GM12878 (cell line): ENCODE measurements at regions of chr17 and their contacts with region 1.

Region 1: GRCh38 chr17:43024407-43025289 is at the start of gene RND2:
- DNase-seq: peak; percentile 40
- ATAC-seq: peak; percentile 77
- H3K4me3 ChIP-seq: peak within 1 kb of the TSS; percentile 81; the same call in 1 of the 2 replicates
- H3K27ac ChIP-seq: no peak within 1 kb of the TSS
- H3K4me1 ChIP-seq: peaks cover 7% of the 10 kb centered on the region; the same call in 1 of the 2 replicates
- H3K27me3 ChIP-seq: no peaks in the 10 kb centered on the region
- CTCF ChIP-seq: peak; percentile 70 to 82 (median 71)
- EP300 ChIP-seq: no peak
- POLR2A ChIP-seq: no peak
- RAD21 ChIP-seq: peak; percentile 74
- polyA plus RNA-seq, gene RND2: not detected

Region 2: GRCh38 chr17:43006639-43007551 is 17.8 kb before region 1 on chr17 and contains the start of gene IFI35:
- CTCF ChIA-PET with region 1: interaction called, 14 read pairs
- POLR2A ChIA-PET with region 1: interaction called, 7 read pairs
- RAD21 ChIA-PET with region 1: interaction called, 4 read pairs
- SMC1A ChIA-PET with region 1: interaction called, 4 read pairs
- in situ Hi-C with region 1: no loop called
- intact Hi-C with region 1: no loop called
- DNase-seq: peak; percentile 69
- ATAC-seq: peak; percentile 97
- H3K4me3 ChIP-seq: peak within 1 kb of the TSS; percentile 97
- H3K27ac ChIP-seq: peak within 1 kb of the TSS; percentile 97
- H3K4me1 ChIP-seq: peaks cover 6% of the 10 kb centered on the region
- H3K27me3 ChIP-seq: no peaks in the 10 kb centered on the region
- CTCF ChIP-seq: peak; percentile 23 to 79 (median 41); a peak in 5 of 6 replicates
- EP300 ChIP-seq: peak in 1 of 2 experiments; percentile 30; a peak in 1 of 4 replicates
- POLR2A ChIP-seq: peak; percentile 80
- RAD21 ChIP-seq: peak; percentile 63
- polyA plus RNA-seq, gene IFI35: 18.4 to 24.4 TPM

Region 3: GRCh38 chr17:43330876-43331639 is 306.4 kb after region 1 on chr17:
- CTCF ChIA-PET with region 1: interaction called, 11 read pairs
- POLR2A ChIA-PET with region 1: no interaction called
- RAD21 ChIA-PET with region 1: interaction called, 8 read pairs
- SMC1A ChIA-PET with region 1: interaction called, 8 read pairs
- in situ Hi-C with region 1: no loop called
- intact Hi-C with region 1: loop called (anchors 5 kb)
- DNase-seq: no peak
- ATAC-seq: no peak
- H3K4me3 ChIP-seq: no peak overlapping the region
- H3K27ac ChIP-seq: no peak overlapping the region
- H3K4me1 ChIP-seq: peaks cover 15% of the 10 kb centered on the region
- H3K27me3 ChIP-seq: no peaks in the 10 kb centered on the region
- CTCF ChIP-seq: no peak
- EP300 ChIP-seq: no peak
- POLR2A ChIP-seq: no peak
- RAD21 ChIP-seq: no peak

Region 4: GRCh38 chr17:43338886-43339516 is 314.4 kb after region 1 on chr17:
- CTCF ChIA-PET with region 1: interaction called, 13 read pairs
- POLR2A ChIA-PET with region 1: no interaction called
- RAD21 ChIA-PET with region 1: interaction called, 8 read pairs
- SMC1A ChIA-PET with region 1: interaction called, 8 read pairs
- in situ Hi-C with region 1: no loop called
- intact Hi-C with region 1: loop called (anchors 5 kb)
- DNase-seq: no peak
- ATAC-seq: no peak
- H3K4me3 ChIP-seq: no peak overlapping the region
- H3K27ac ChIP-seq: no peak overlapping the region
- H3K4me1 ChIP-seq: peaks cover 9% of the 10 kb centered on the region
- H3K27me3 ChIP-seq: no peaks in the 10 kb centered on the region
- CTCF ChIP-seq: peak; percentile 57 to 81 (median 62)
- EP300 ChIP-seq: no peak
- POLR2A ChIP-seq: no peak
- RAD21 ChIP-seq: peak; percentile 68